PC-9 (cell line): ENCODE measurements at regions of chr11 and their contacts with region 1.

Region 1: GRCh38 chr11:65844231-65845190 is 10.7 kb downstream of the SNX32 start:
- DNase-seq: no peak
- H3K4me3 ChIP-seq: no peak overlapping the region
- H3K27ac ChIP-seq: no peak overlapping the region
- H3K4me1 ChIP-seq: no peaks in the 10 kb centered on the region
- H3K27me3 ChIP-seq: no peaks in the 10 kb centered on the region
- CTCF ChIP-seq: no peak

Region 2: DNA sequence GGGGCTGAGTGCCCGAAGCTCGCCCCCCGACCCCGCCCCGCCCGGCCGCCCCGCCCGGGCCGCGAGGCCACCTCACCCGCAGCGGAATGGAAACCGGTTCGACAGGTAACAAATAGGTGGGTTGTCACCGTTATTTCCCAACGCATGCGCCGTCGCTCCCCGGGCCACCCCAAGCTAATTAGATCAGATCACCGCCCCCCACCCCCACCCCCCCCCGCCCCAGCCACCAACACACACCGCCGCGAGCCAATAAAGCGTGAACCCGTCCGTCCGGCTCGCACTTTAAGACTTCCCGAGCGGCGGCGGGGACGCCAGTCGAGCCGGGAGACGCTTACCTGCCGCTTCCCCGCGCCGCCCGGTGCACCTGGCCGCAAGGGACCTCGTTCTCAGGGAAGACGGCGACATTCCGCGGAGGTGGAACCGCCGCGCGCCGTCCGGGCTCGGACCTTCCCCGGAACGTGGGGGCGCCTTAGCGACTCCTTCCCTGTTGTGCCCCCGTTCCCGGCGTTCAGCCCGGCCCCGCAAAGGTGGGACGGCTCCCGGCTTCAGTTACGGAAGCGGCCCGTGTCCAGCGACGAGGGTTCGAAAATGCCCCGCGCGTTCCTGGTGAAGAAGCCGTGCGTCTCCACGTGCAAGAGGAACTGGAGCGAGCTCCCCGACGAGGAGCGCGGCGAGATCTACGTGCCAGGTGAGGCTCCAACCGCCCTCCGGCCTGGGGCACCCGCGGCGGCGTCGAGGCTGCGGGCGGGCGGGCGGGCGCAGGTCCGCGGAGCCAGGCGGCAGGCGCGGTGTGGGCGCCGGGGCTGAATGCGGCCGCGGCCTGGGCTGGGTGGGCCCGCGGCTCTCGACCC is 57.5 kb before region 1 on chr11 and contains the start of gene OVOL1:
- CTCF ChIA-PET with region 1: no interaction called
- POLR2A ChIA-PET with region 1: interaction called, 21 read pairs
- intact Hi-C with region 1: no loop called
- DNase-seq: peak; percentile 87 to 93
- H3K4me3 ChIP-seq: peak within 1 kb of the TSS; percentile 93
- H3K27ac ChIP-seq: peak within 1 kb of the TSS; percentile 68
- H3K4me1 ChIP-seq: peaks cover 47% of the 10 kb centered on the region
- H3K27me3 ChIP-seq: no peaks in the 10 kb centered on the region
- CTCF ChIP-seq: no peak
- total RNA-seq, gene OVOL1: 10.2 and 10.5 TPM in 2 replicates

Region 3: GRCh38 chr11:65873318-65874156 is 29.0 kb after region 1 on chr11:
- CTCF ChIA-PET with region 1: interaction called, 15 read pairs
- POLR2A ChIA-PET with region 1: no interaction called
- intact Hi-C with region 1: no loop called
- DNase-seq: peak; percentile 74 to 98
- H3K4me3 ChIP-seq: peak overlapping the region; percentile 61
- H3K27ac ChIP-seq: no peak overlapping the region
- H3K4me1 ChIP-seq: peaks cover 4% of the 10 kb centered on the region; the same call in 1 of the 2 replicates
- H3K27me3 ChIP-seq: no peaks in the 10 kb centered on the region
- CTCF ChIP-seq: no peak